ENCODE measurements at regions of chr3 and their contacts with region 1.

Region 1: GRCh38 chr3:61778670-61779069 is 217.3 kb downstream of the PTPRG start:
- DNase-seq: no peak
- ATAC-seq: no peak
- H3K4me3 ChIP-seq: no peak overlapping the region
- H3K4me3 Mint-ChIP-seq: no peak overlapping the region
- H3K27ac ChIP-seq: no peak overlapping the region
- H3K27ac Mint-ChIP-seq: no peak overlapping the region
- H3K4me1 ChIP-seq: no peaks in the 10 kb centered on the region
- H3K4me1 Mint-ChIP-seq: no peaks in the 10 kb centered on the region
- H3K27me3 ChIP-seq: no peaks in the 10 kb centered on the region
- H3K27me3 Mint-ChIP-seq: peaks cover 4% of the 10 kb centered on the region
- CTCF ChIP-seq: no peak

Region 2: GRCh38 chr3:61788622-61789507 is 10.2 kb after region 1 on chr3:
- CTCF ChIA-PET with region 1: no interaction called
- POLR2A ChIA-PET with region 1: no interaction called
- intact Hi-C with region 1: loop called in 1 of 2 experiments (anchors 1 kb)
- DNase-seq: no peak
- ATAC-seq: no peak
- H3K4me3 ChIP-seq: no peak overlapping the region
- H3K4me3 Mint-ChIP-seq: no peak overlapping the region
- H3K27ac ChIP-seq: no peak overlapping the region
- H3K27ac Mint-ChIP-seq: no peak overlapping the region
- H3K4me1 ChIP-seq: no peaks in the 10 kb centered on the region
- H3K4me1 Mint-ChIP-seq: no peaks in the 10 kb centered on the region
- H3K27me3 ChIP-seq: no peaks in the 10 kb centered on the region
- H3K27me3 Mint-ChIP-seq: no peaks in the 10 kb centered on the region
- CTCF ChIP-seq: no peak

Region 3: GRCh38 chr3:62051507-62051906 is 272.8 kb after region 1 on chr3:
- CTCF ChIA-PET with region 1: no interaction called
- POLR2A ChIA-PET with region 1: no interaction called
- intact Hi-C with region 1: no loop called
- DNase-seq: no peak
- ATAC-seq: no peak
- H3K4me3 ChIP-seq: no peak overlapping the region
- H3K4me3 Mint-ChIP-seq: no peak overlapping the region
- H3K27ac ChIP-seq: no peak overlapping the region
- H3K27ac Mint-ChIP-seq: no peak overlapping the region
- H3K4me1 ChIP-seq: no peaks in the 10 kb centered on the region
- H3K4me1 Mint-ChIP-seq: no peaks in the 10 kb centered on the region
- H3K27me3 ChIP-seq: no peaks in the 10 kb centered on the region
- H3K27me3 Mint-ChIP-seq: no peaks in the 10 kb centered on the region
- CTCF ChIP-seq: no peak

Measured in CD4-positive, alpha-beta T cell (primary cell).